GM13977 (cell line): ENCODE measurements at regions of chr4 and their contacts with region 1.

Region 1: GRCh38 chr4:185134307-185134869 is 8.7 kb upstream of the SLC25A4 start:
- DNase-seq: peak; percentile 81
- CTCF ChIP-seq: peak; percentile 73

Region 2: GRCh38 chr4:185039508-185040273 is 94.7 kb before region 1 on chr4:
- in situ Hi-C with region 1: loop called (anchors 10 kb)
- DNase-seq: peak; percentile 76
- CTCF ChIP-seq: peak; percentile 75